ENCODE measurements at regions of chr18 and their contacts with region 1.

Region 1: GRCh38 chr18:37668971-37669747 is 103.6 kb upstream of the CELF4 start:
- DNase-seq: no peak
- H3K4me3 Mint-ChIP-seq: no peak overlapping the region
- H3K27ac Mint-ChIP-seq: no peak overlapping the region
- H3K4me1 Mint-ChIP-seq: peaks cover 11% of the 10 kb centered on the region
- H3K27me3 Mint-ChIP-seq: no peaks in the 10 kb centered on the region
- CTCF ChIP-seq: no peak

Region 2: DNA sequence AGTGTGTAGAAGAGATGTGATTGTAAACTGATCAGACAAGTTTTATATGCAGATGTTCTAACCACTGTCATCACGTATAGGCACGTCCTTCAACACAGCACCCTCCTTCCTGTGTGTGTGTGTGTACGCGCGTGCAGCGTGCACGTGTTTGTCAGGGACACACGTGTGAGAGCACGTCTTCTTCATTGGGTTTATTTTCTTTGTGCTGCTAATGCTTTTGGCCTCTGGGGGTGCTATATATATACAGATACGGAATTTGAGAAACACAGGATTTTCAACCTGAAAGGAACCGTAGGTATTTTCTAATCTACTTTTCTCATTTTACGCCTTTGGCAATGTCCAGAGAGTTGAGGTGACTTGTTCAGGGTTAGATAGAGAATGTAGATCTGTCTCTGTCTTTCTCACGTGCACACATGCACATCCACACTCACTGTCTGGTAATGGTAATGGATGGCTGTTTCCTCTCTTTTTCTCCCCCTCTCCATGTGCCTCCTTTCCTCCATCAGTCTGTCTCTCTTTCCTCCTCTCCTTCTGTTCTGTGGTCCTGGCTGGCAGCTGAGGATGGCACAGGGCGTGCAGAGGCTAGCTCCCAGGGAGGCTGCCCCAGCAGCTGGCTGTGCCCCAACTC is 90.2 kb before region 1 on chr18:
- CTCF ChIA-PET with region 1: no interaction called
- intact Hi-C with region 1: loop called (anchors 10 kb)
- DNase-seq: peak; percentile 16
- H3K4me3 Mint-ChIP-seq: no peak overlapping the region
- H3K27ac Mint-ChIP-seq: no peak overlapping the region
- H3K4me1 Mint-ChIP-seq: no peaks in the 10 kb centered on the region
- H3K27me3 Mint-ChIP-seq: peaks cover 72% of the 10 kb centered on the region
- CTCF ChIP-seq: peak; percentile 41

Measured in Calu3 (cell line).